ENCODE measurements at regions of chr3 and their contacts with region 1.

Region 1: DNA sequence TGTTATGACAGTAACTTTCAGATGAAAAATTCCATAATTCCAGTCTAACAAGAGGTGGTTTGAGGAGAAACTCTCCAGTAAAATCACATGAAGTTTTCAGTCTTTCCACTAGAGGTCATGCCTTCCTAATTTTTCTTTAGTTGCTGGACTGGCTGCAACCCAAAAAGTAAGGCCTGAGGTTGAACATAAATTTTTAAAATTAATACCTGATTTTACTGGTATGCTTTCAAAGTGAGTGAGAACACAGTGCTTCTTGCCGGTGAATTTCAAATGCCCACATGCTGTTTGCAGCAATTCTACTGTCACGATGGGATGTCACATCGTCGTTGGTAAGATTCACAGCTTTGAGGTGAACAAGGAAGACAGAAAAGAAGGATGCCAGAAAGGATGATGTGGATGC is 89.0 kb upstream of the FGF12 start:
- DNase-seq: peak in 1 of 4 donors; percentile 60
- ATAC-seq: peak; percentile 66
- H3K4me3 ChIP-seq: no peak overlapping the region
- H3K27ac ChIP-seq: no peak overlapping the region
- H3K4me1 ChIP-seq: peaks cover 0 to 4% of the 10 kb centered on the region in 2 donors
- H3K27me3 ChIP-seq: no peaks in the 10 kb centered on the region
- CTCF ChIP-seq: peak; percentile 47 to 67

Region 2: DNA sequence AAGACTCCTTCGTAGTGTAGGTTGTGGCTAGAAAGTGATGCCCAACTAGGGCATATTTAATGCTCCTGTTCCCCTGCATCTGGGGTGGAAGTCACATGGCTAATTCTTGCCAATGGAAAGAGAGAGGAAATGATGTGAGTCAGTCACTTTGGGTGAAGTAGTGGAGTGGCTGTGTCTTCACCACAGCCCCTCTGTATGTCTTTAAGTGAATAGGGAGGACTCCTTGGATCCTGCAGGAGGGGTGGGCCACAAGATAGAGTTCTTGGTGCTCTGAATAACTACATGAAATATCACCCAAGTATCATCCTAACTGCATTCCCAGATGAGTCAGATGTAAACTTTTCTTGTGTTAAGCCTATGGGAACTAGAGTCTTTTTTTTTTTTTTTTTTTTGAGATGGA is 119.1 kb after region 1 on chr3:
- intact Hi-C with region 1: no loop called
- DNase-seq: no peak
- ATAC-seq: no peak
- H3K4me3 ChIP-seq: no peak overlapping the region
- H3K27ac ChIP-seq: no peak overlapping the region
- H3K4me1 ChIP-seq: peaks cover 0 to 3% of the 10 kb centered on the region in 2 donors
- H3K27me3 ChIP-seq: no peaks in the 10 kb centered on the region
- CTCF ChIP-seq: no peak

Region 3: GRCh38 chr3:193040836-193041672 is 224.7 kb after region 1 on chr3:
- intact Hi-C with region 1: loop called in 1 of 2 experiments (anchors 5 kb)
- DNase-seq: peak in 1 of 4 donors; percentile 24
- ATAC-seq: peak; percentile 75
- H3K4me3 ChIP-seq: no peak overlapping the region
- H3K27ac ChIP-seq: no peak overlapping the region
- H3K4me1 ChIP-seq: no peaks in the 10 kb centered on the region
- H3K27me3 ChIP-seq: peaks cover 0 to 3% of the 10 kb centered on the region in 2 donors
- CTCF ChIP-seq: peak; percentile 16 to 19

Region 4: GRCh38 chr3:193095366-193095765 is 279.0 kb after region 1 on chr3:
- intact Hi-C with region 1: no loop called
- DNase-seq: no peak
- ATAC-seq: no peak
- H3K4me3 ChIP-seq: no peak overlapping the region
- H3K27ac ChIP-seq: no peak overlapping the region
- H3K4me1 ChIP-seq: no peaks in the 10 kb centered on the region
- H3K27me3 ChIP-seq: no peaks in the 10 kb centered on the region
- CTCF ChIP-seq: no peak

Region 5: GRCh38 chr3:193572426-193572908 is 756.1 kb after region 1 on chr3:
- intact Hi-C with region 1: loop called in 1 of 2 experiments (anchors 10 kb)
- DNase-seq: peak in 2 of 4 donors; percentile 46 to 72
- ATAC-seq: peak; percentile 95
- H3K4me3 ChIP-seq: no peak overlapping the region
- H3K27ac ChIP-seq: no peak overlapping the region
- H3K4me1 ChIP-seq: no peaks in the 10 kb centered on the region
- H3K27me3 ChIP-seq: no peaks in the 10 kb centered on the region
- CTCF ChIP-seq: peak; percentile 59 to 72